Head of caudate nucleus (tissue), 42 donors: ENCODE measurements at regions of chr10 and their contacts with region 1.

Region 1: DNA sequence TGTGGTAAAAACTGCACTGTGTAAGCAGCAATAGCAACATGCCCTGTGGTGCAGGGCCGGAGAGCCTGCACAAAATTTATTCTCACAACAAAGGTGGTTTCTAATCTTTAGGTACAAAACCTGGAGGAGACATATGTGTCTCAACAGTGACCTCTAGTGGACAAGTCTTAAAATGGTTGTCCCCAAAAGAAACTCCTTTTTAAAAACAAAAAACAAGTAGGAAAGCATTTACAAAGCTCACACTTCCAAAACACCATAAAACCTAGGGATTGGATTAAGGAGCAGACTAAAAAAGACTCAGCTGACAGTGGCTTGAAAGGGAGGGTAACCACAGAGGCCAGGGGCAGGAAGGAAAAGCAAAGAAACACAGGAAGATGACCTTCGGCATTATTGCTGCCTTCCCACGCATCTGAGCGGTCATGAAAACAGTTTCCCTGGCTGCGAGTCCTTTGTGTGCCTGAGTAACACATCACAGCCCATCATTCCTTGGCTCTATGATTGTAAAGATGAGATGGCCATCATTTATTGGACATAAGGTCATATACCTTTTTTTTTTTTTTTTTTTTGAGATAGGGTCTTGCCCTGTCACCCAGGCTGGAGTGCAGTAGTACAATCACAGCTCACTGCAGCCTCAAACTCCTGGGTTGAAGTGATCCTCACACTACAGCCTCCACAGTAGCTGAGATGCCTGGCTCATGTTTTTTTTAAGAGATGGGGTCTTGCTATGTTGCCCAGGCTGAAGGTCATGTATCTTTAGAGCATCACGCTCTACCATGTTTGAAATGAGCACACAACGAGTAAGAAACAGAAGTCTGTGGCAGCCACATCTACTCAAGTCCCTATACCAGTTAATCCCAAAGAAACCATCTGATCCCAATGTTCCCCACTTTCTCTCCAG is 39.5 kb downstream of the RSU1 start:
- DNase-seq: peak in 1 of 42 donors; percentile 17

Region 2: DNA sequence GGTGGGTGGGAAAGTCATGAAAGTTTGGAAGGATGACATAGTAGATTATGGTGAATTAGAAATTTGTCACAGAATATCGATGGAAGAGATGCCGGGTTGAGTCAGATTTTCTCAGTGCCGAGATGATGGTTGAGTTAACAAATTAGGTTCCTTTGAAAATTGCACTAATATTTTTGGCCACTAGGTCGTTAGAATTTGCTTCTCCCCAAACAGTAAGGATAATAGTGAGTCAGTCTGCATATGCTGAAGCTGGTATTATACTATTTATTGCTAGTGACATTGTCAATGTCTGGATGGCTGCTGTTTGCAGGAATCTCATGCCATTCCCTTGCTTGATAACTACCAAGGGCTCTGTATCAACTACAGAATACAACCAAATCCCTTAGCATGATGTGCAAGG is 879.7 kb before region 1 on chr10:
- intact Hi-C with region 1: loop called (anchors 10 kb)
- DNase-seq: peak in 12 of 42 donors; percentile 7 to 51 (median 14)

Region 3: GRCh38 chr10:16853201-16853600 is 75.5 kb after region 1 on chr10:
- intact Hi-C with region 1: no loop called
- DNase-seq: no peak